Activated naive CD4-positive, alpha-beta T cell treated with anti-CD3 and anti-CD28 coated beads for 36 hours (primary cell): ENCODE measurements at regions of chr6 and their contacts with region 1.

Region 1: DNA sequence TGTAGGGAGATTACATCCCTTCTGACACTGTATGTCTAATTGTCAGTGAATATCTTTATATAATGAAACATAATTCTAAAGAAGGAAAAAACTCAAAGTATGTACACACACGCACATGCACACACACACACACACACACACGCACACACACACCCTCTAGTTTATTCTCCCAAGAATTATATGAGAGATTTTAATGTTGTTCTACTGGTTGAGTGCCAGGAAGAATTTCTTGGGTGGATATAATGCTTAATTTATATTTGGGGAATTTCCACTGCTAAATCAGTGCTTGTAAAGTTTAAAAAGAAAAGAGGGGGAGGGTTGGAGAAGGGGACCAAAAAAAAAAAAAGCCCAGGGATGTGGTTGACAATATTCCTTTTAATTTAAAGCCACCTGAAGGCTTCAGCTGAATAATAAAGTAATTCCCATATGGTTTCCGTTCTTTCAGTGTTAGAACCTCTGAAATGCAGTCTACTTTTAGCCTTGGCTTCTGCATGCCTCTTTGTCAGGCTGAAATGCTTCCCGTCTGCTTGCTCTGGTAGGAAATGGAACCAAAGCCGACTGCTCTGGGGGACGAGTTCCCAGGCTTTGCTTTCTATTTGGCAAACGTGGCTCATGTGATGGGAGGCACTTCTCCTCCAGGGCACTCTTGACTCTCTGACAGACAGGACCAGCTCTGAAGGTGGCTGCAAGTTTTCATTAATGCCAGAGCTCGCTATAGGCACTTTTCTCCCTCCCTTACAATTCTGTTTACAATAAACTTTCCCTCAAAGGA is 225.4 kb downstream of the PRL start:
- DNase-seq: no peak
- H3K4me3 Mint-ChIP-seq: no peak overlapping the region
- H3K27ac Mint-ChIP-seq: no peak overlapping the region
- H3K4me1 Mint-ChIP-seq: no peaks in the 10 kb centered on the region
- H3K27me3 Mint-ChIP-seq: no peaks in the 10 kb centered on the region

Region 2: GRCh38 chr6:21883595-21884201 is 187.8 kb before region 1 on chr6:
- CTCF ChIA-PET with region 1: no interaction called
- intact Hi-C with region 1: no loop called
- DNase-seq: no peak
- H3K4me3 Mint-ChIP-seq: no peak overlapping the region
- H3K27ac Mint-ChIP-seq: no peak overlapping the region
- H3K4me1 Mint-ChIP-seq: peaks cover 8% of the 10 kb centered on the region
- H3K27me3 Mint-ChIP-seq: no peaks in the 10 kb centered on the region

Region 3: DNA sequence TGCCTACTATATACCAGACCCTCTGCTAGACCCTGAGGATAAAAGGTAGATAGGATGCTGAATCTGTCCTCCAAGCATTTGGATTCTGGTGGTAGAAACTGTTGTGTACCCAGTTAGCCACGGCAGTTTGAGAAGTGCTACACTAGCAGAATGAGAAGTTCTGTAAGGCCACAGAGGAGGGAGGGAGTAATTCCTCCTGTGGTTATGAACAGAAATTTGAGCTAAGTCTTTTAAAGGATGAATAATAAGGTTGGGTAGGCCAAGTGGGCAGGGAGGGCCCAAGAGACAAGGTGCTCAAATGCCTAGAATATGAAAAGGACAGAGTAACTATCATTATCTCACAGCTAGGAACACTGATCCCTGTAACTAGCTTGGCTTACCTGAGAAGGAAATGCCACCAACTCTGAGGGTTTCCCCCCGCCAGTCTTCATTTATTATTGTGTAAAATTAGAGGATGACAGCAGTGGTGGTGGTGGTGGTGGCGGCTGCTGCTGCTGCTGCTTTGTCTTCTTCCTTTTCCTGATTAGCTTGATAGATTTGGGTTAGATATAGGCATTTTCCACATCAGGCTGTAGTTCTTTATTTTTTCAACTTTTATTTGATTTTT is 18.0 kb before region 1 on chr6:
- CTCF ChIA-PET with region 1: no interaction called
- intact Hi-C with region 1: no loop called
- DNase-seq: no peak
- H3K4me3 Mint-ChIP-seq: no peak overlapping the region
- H3K27ac Mint-ChIP-seq: no peak overlapping the region
- H3K4me1 Mint-ChIP-seq: no peaks in the 10 kb centered on the region
- H3K27me3 Mint-ChIP-seq: peaks cover 2% of the 10 kb centered on the region

Region 4: DNA sequence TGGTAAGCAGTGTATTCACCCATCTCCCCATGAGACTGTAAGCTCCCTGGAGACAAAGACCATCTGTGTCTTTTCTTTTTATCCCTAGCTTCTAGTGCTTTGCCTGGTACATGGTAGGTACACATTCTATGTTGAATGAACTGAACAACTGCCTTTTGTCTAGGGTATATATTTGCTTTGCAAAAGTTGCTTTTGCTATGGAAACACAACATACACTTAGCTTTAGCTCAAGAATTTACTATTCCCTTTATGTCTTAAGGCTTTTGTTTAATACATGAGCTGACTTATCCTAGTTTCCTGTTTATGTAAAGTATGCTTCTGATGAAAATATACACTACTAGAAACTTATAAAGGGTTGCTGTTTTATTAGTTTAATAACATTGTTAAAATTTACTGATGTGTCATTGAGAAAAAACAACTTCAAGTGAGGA is 27.2 kb after region 1 on chr6:
- CTCF ChIA-PET with region 1: no interaction called
- intact Hi-C with region 1: no loop called
- DNase-seq: no peak
- H3K4me3 Mint-ChIP-seq: no peak overlapping the region
- H3K27ac Mint-ChIP-seq: no peak overlapping the region
- H3K4me1 Mint-ChIP-seq: peaks cover 5% of the 10 kb centered on the region
- H3K27me3 Mint-ChIP-seq: no peaks in the 10 kb centered on the region

Region 5: DNA sequence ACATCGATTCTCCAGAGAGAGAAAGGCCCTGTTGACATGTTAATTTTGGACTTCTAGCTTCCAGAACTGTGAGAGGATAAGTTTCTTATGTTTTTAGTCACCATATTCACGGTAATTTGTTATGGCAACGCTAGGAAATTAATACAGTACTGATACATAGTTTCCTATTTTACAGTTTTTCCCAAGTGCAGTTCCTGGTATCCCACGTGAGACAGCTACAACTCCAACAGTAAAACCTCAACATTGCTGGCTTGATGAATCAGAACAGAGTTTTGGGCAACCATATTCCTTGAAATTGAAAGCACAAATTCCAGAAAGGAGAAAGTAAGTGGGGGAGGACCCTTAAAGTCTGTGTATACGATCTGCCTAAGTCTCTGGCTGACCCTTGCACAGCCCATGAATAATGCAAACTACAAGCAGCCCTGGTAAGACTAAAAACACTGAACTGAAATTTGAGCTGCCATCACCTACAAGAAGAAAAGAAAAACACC is 1549.5 kb after region 1 on chr6:
- CTCF ChIA-PET with region 1: no interaction called
- intact Hi-C with region 1: loop called (anchors 10 kb)
- DNase-seq: no peak
- H3K4me3 Mint-ChIP-seq: no peak overlapping the region
- H3K27ac Mint-ChIP-seq: no peak overlapping the region
- H3K4me1 Mint-ChIP-seq: no peaks in the 10 kb centered on the region
- H3K27me3 Mint-ChIP-seq: peaks cover 2% of the 10 kb centered on the region